ENCODE measurements at regions of chr1 and their contacts with region 1.

Region 1: GRCh38 chr1:117367047-117368018 is at the start of gene MAN1A2:
- DNase-seq: peak; percentile 74 to 97 (median 80)

Region 2: DNA sequence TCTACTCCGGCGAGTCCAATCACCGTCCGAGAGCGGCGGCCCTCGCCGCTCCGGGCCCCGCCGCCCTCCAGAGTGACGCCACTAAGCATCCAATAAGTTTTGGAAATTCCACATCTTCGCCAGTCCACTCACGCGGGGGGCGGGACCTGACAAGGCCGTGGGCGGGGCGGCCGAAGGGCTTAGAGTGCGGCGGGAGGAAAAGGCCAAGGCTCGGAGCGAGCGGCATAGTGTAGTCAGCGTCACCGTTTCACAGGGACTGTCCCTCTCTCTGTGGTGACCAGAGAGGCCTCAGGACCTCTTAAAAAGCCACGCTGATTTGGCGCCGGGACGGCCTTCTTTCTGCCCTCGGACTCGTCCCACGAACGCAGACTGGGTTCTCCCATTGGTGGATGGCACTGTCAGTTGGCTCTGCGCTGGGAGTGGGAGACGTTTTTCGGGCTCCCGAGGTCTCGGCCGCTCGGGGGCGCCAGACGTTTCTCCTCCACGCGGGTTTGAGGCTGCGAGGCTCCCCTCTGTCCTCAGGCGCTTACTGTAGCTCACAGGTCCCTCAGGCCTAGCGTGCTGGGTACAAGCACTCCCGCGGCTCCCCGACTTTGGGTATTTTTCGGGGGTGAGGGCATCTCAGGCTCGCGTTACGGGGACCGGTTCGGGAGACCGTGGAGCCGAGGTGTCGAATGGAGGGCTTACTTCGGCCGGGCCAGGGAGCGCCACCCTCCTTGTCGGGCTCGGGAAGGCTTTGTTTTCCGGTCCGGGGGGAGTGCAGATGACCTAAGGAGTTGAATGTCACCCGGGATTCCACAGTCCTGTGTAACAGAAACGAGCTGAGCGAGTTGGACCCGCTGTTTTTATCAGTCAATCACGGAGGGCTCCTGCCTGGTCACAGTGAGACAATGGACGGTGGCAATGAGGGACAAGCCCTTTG is 245.3 kb before region 1 on chr1:
- intact Hi-C with region 1: loop called (anchors 5 kb)
- DNase-seq: peak; percentile 94 to 99 (median 97)

Region 3: DNA sequence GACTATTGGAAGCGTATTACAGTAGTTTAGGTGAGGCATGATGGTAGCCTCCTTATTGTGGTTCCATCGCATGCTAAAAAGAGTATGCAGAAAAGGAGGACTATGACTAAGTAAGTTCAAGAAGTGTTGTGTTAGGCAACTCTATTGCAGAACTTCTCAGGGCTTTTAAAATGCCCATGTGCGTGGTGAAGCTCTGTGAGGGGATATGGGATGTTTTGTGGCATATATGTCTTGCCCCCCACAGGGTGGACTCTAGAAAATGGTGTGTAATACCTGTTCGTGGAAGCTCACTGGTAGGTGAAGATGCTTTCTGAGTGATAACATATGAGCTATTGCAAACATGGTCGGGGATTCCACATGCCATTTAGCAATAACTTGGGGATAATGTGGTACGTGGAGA is 31.6 kb after region 1 on chr1:
- intact Hi-C with region 1: no loop called
- DNase-seq: no peak

Region 4: GRCh38 chr1:117512743-117513321 is 145.5 kb after region 1 on chr1:
- intact Hi-C with region 1: loop called (anchors 10 kb)
- DNase-seq: no peak

Region 5: GRCh38 chr1:117638759-117639158 is 271.4 kb after region 1 on chr1:
- intact Hi-C with region 1: no loop called
- DNase-seq: no peak

Measured in posterior cingulate gyrus (tissue), 11 donors.